ENCODE measurements at regions of chr1 and their contacts with region 1.

Region 1: GRCh38 chr1:116498789-116499628 is 71.8 kb downstream of the CD58 start:
- DNase-seq: peak; percentile 88
- H3K4me3 ChIP-seq: no peak overlapping the region; a peak in 1 of 4 replicates
- H3K27ac ChIP-seq: no peak overlapping the region
- H3K4me1 ChIP-seq: peaks cover 12 to 36% of the 10 kb centered on the region in 2 experiments; a peak in 3 of 4 replicates
- H3K27me3 ChIP-seq: no peaks in the 10 kb centered on the region
- CTCF ChIP-seq: peak; percentile 91
- EP300 ChIP-seq: no peak
- RAD21 ChIP-seq: peak; percentile 96

Region 2: DNA sequence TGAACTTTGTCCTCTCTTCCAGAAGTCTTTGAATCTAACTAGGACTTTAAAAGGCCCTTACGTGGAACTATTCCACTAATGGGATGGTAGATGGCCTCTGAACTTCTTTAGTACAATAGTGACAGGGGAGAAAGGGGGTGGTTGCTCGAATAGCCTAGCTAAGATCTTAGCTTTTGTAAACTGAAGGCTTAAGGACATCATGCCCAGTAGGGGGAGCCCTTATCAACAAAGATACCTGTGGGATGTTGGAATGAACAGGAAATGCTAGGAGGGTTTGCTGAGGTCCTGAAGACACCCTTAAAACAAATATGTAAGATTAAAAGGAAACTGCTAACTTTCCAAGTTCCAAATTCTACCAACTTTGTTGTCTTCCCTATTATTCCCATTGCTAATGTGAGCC is 691.3 kb before region 1 on chr1:
- CTCF ChIA-PET with region 1: interaction called, 12 read pairs
- POLR2A ChIA-PET with region 1: no interaction called
- DNase-seq: peak; percentile 51
- H3K4me3 ChIP-seq: no peak overlapping the region; a peak in 1 of 4 replicates
- H3K27ac ChIP-seq: no peak overlapping the region
- H3K4me1 ChIP-seq: peaks cover 0 to 7% of the 10 kb centered on the region in 2 experiments; a peak in 1 of 4 replicates
- H3K27me3 ChIP-seq: no peaks in the 10 kb centered on the region; the same call in 1 of the 2 replicates
- CTCF ChIP-seq: peak; percentile 82
- EP300 ChIP-seq: no peak
- RAD21 ChIP-seq: peak; percentile 85

Region 3: DNA sequence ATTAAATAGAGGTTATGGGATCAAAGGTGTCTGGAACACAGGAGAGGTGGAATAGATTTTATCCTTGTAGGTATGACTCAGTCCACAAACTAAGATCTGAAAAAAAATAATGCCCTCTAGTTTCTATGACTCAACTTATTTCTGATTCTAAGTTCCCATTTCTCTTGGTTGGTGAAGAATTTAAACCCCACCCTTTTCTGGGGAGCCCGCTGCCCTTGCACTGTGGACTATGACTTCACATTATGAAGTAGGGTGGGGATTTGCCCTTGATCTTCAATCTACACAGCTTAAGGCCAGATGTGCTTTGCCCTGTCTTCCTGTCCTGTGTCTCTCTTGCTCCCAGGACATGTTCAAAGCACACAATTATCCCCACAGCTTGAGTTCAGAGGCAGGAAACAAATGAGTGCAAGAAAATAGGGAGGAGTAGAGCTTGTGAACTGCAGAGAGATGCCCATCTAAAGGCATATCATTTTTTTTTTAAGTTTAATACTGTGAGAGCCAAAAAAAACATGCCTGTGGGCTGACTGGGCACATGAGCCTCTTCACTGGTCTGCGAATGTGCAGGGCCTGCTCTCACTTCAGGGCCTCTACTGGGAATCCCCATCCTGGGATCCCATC is 10.1 kb after region 1 on chr1:
- CTCF ChIA-PET with region 1: interaction called, 34 read pairs
- POLR2A ChIA-PET with region 1: no interaction called
- DNase-seq: no peak
- H3K4me3 ChIP-seq: no peak overlapping the region
- H3K27ac ChIP-seq: peak overlapping the region; percentile 29 to 97; a peak in 3 of 4 replicates
- H3K4me1 ChIP-seq: peaks cover 23% of the 10 kb centered on the region in 2 experiments; a peak in 3 of 4 replicates
- H3K27me3 ChIP-seq: no peaks in the 10 kb centered on the region
- CTCF ChIP-seq: no peak
- EP300 ChIP-seq: peak in 1 of 2 experiments; percentile 59; a peak in 1 of 4 replicates
- RAD21 ChIP-seq: no peak

Region 4: GRCh38 chr1:116514708-116515525 is 15.9 kb after region 1 on chr1:
- CTCF ChIA-PET with region 1: interaction called, 34 read pairs
- POLR2A ChIA-PET with region 1: no interaction called
- DNase-seq: no peak
- H3K4me3 ChIP-seq: no peak overlapping the region
- H3K27ac ChIP-seq: peak overlapping the region in 1 of 2 experiments; percentile 91; a peak in 3 of 4 replicates
- H3K4me1 ChIP-seq: peaks cover 0 to 39% of the 10 kb centered on the region in 2 experiments; a peak in 2 of 4 replicates
- H3K27me3 ChIP-seq: no peaks in the 10 kb centered on the region
- CTCF ChIP-seq: no peak
- EP300 ChIP-seq: no peak
- RAD21 ChIP-seq: no peak